ENCODE measurements at regions of chrX and their contacts with region 1.

Region 1: GRCh38 chrX:151753313-151754041 is 18.9 kb downstream of the CNGA2 start:
- H3K4me3 ChIP-seq: no peak overlapping the region
- H3K27ac ChIP-seq: no peak overlapping the region
- H3K4me1 ChIP-seq: no peaks in the 10 kb centered on the region
- CTCF ChIP-seq: peak; percentile 68

Region 2: GRCh38 chrX:151801993-151802392 is 48.5 kb after region 1 on chrX:
- CTCF ChIA-PET with region 1: interaction called, 10 read pairs
- POLR2A ChIA-PET with region 1: no interaction called
- H3K4me3 ChIP-seq: no peak overlapping the region
- H3K27ac ChIP-seq: no peak overlapping the region
- H3K4me1 ChIP-seq: no peaks in the 10 kb centered on the region
- CTCF ChIP-seq: no peak

Region 3: GRCh38 chrX:152632445-152633097 is 879.1 kb after region 1 on chrX:
- CTCF ChIA-PET with region 1: interaction called, 168 read pairs
- POLR2A ChIA-PET with region 1: interaction called, 7 read pairs
- H3K4me3 ChIP-seq: no peak overlapping the region
- H3K27ac ChIP-seq: no peak overlapping the region
- H3K4me1 ChIP-seq: no peaks in the 10 kb centered on the region
- CTCF ChIP-seq: peak; percentile 34; the same call in 1 of the 2 replicates

Region 4: GRCh38 chrX:152810403-152810802 is 1056.9 kb after region 1 on chrX:
- CTCF ChIA-PET with region 1: interaction called, 18 read pairs
- POLR2A ChIA-PET with region 1: no interaction called
- H3K4me3 ChIP-seq: no peak overlapping the region
- H3K27ac ChIP-seq: no peak overlapping the region
- H3K4me1 ChIP-seq: no peaks in the 10 kb centered on the region
- CTCF ChIP-seq: no peak

Region 5: GRCh38 chrX:152821145-152821765 is 1067.8 kb after region 1 on chrX:
- CTCF ChIA-PET with region 1: interaction called, 20 read pairs
- POLR2A ChIA-PET with region 1: no interaction called
- H3K4me3 ChIP-seq: no peak overlapping the region
- H3K27ac ChIP-seq: no peak overlapping the region
- H3K4me1 ChIP-seq: no peaks in the 10 kb centered on the region
- CTCF ChIP-seq: peak; percentile 75

Measured in HEK293 (cell line).